ENCODE measurements at regions of chr12 and their contacts with region 1.

Region 1: GRCh38 chr12:6278439-6279255 is 31.8 kb upstream of the PLEKHG6 start:
- DNase-seq: peak; percentile 90 to 91 (median 90)
- ATAC-seq: peak; percentile 84 to 95 (median 91)
- H3K4me3 ChIP-seq: peak overlapping the region; percentile 39 to 57 (median 56)
- H3K27ac ChIP-seq: peak overlapping the region; percentile 87 to 95 (median 87)
- H3K4me1 ChIP-seq: peaks cover 0 to 28% (median 8%) of the 10 kb centered on the region in 4 donors
- H3K27me3 ChIP-seq: no peaks in the 10 kb centered on the region
- CTCF ChIP-seq: peak; percentile 84 to 99 (median 94)
- POLR2A ChIP-seq: peak; percentile 84

Region 2: DNA sequence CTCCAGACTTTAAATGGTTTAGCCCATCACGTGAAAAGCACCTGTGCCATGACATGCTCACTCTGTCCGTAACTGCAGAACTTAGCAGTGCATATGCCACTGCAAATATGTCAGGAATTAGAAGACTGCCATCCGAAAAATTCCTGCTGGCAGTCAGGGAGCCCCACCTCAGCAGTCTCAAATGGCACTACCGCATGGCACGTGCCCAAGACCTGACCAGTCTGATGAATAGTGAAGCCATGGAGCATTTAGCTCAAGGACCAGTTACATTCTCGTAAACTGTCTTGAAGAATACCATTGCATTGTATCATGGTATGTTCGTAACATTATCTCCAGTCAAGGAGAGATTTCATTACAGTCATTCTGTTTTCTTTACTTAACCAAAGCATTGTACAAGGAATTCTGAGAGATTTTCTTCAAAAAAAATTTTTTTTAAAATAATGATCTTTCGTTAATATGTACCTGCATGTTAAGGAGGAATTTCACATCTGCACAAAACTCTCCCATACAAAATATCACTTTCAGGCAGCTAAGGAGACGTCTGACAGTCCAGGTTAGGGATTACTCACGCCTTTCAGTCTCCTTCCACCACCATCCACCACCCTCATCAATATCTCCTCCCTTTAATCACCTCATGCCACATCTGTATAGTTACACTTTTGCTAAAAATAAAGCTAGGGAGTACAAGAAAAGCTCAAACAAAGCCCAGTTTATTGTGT is 472.1 kb before region 1 on chr12:
- intact Hi-C with region 1: no loop called
- DNase-seq: no peak
- ATAC-seq: no peak
- H3K4me3 ChIP-seq: no peak overlapping the region
- H3K27ac ChIP-seq: no peak overlapping the region
- H3K4me1 ChIP-seq: no peaks in the 10 kb centered on the region
- H3K27me3 ChIP-seq: no peaks in the 10 kb centered on the region
- CTCF ChIP-seq: no peak
- POLR2A ChIP-seq: no peak

Region 3: GRCh38 chr12:5898876-5899275 is 379.8 kb before region 1 on chr12:
- intact Hi-C with region 1: no loop called
- DNase-seq: no peak
- ATAC-seq: no peak
- H3K4me3 ChIP-seq: no peak overlapping the region
- H3K27ac ChIP-seq: no peak overlapping the region
- H3K4me1 ChIP-seq: no peaks in the 10 kb centered on the region
- H3K27me3 ChIP-seq: no peaks in the 10 kb centered on the region
- CTCF ChIP-seq: no peak
- POLR2A ChIP-seq: no peak

Region 4: GRCh38 chr12:6067152-6067916 is 211.3 kb before region 1 on chr12:
- intact Hi-C with region 1: loop called (anchors 5 kb)
- DNase-seq: peak; percentile 74 to 80 (median 79)
- ATAC-seq: peak; percentile 56 to 71 (median 61)
- H3K4me3 ChIP-seq: no peak overlapping the region
- H3K27ac ChIP-seq: peak overlapping the region in 2 of 3 donors; percentile 21 to 24
- H3K4me1 ChIP-seq: peaks cover 0 to 30% (median 5%) of the 10 kb centered on the region in 4 donors
- H3K27me3 ChIP-seq: no peaks in the 10 kb centered on the region
- CTCF ChIP-seq: peak; percentile 53 to 63 (median 60)
- POLR2A ChIP-seq: no peak

Region 5: GRCh38 chr12:6335451-6336078 is 56.9 kb after region 1 on chr12:
- intact Hi-C with region 1: no loop called
- DNase-seq: peak; percentile 83 to 88 (median 85)
- ATAC-seq: peak; percentile 38 to 54 (median 48)
- H3K4me3 ChIP-seq: peak overlapping the region; percentile 33 to 100 (median 51)
- H3K27ac ChIP-seq: peak overlapping the region; percentile 90 to 100 (median 97)
- H3K4me1 ChIP-seq: peaks cover 0 to 62% (median 24%) of the 10 kb centered on the region in 4 donors
- H3K27me3 ChIP-seq: no peaks in the 10 kb centered on the region
- CTCF ChIP-seq: peak; percentile 31 to 44 (median 35)
- POLR2A ChIP-seq: peak; percentile 42